Left cardiac atrium (tissue), 4 donors: ENCODE measurements at regions of chr10 and their contacts with region 1.

Region 1: DNA sequence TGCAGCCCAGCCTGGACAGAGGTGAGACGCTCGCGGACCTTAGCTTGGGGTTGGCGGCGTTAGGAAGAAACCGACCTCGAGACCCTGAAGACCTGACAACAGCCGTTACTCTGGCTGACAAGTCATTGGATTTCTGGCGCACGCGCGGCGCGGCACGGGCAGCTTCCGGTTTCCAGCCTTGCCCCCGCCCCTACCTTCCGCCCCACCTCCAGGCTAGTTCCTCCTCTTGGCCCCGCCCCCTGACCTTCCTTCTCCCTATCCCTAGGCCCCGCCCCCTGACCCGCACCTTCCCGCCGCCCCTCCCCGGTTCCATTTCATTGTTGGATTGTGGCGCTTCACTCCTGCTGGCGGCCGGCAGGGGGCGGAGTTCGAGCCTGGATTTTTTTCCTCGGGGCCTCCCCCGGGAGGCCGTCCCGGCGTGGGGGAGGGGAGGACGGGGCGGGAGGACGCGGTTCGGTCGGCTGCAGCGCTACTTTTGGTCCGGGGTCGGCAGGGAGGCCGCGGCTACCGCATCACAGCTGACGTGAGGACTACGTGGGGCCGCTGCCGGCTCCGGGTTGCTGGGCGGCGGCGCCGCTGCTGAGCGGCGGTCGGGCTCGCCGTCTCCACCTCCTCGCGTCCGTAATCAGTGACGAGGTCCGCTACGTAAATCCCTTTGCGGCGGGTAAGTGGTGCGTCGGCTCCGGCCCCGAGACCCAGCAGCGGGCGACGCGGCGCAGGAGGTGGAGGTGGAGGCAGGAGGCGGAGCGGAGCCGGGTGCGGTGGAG is at the start of gene CREM:
- DNase-seq: peak; percentile 100
- ATAC-seq: peak; percentile 95 to 97
- total RNA-seq, gene CREM: 41.0 to 41.4 TPM

Region 2: GRCh38 chr10:35058134-35058533 is 68.6 kb before region 1 on chr10:
- intact Hi-C with region 1: no loop called
- DNase-seq: no peak
- ATAC-seq: no peak

Region 3: DNA sequence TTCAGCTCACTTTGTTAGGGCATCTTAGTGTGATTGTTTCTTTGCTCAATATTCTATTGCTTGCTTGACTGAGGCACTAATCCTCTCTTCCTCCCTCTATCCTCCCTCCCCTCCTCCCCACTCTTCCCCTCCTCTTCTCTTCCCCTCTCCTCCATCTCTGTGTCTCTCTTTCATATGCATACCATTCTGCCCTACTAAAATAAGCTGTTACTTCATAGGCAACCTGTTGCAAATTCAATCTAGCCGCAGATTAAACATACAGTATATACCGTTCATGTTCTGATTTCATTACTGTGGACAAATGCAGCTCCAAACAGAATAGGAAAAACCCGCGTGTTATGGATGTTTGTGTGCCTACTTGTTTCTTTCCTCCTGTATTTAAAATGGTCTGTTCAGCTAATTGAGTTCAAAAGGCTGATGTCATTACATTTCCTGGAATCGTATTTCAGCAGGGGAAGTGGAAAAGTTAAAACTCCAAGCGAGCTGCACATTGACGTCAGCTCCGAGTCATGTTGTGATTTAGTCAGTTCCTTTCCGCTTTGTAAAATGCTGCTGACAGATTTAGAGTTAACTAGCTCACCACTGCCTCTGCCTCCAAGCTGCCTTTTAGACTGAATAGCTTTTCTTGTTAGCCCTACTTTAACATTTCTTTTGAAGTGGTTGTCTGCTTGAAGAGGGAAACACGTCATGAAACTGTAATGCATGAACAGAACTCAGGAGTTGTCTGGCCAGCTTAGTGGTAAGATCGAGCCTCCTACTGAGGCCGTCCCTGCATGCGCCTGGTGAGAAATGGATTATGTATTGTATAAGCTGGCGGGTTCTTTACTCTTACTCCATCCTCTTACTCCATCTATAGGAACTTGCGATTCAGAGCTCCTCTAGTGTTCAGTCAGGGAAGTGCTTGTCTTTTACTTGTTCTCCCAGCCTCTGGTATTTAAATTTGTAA is 68.9 kb after region 1 on chr10:
- intact Hi-C with region 1: loop called (anchors 2 to 5 kb)
- DNase-seq: peak; percentile 83
- ATAC-seq: peak; percentile 90

Region 4: GRCh38 chr10:35218339-35218955 is 91.7 kb after region 1 on chr10:
- intact Hi-C with region 1: loop called in 1 of 2 experiments (anchors 2 kb)
- DNase-seq: peak; percentile 89
- ATAC-seq: peak; percentile 78 to 79